Activated CD4-positive, alpha-beta memory T cell treated with anti-CD3 and anti-CD28 coated beads for 36 hours (primary cell): ENCODE measurements at regions of chr7 and their contacts with region 1.

Region 1: DNA sequence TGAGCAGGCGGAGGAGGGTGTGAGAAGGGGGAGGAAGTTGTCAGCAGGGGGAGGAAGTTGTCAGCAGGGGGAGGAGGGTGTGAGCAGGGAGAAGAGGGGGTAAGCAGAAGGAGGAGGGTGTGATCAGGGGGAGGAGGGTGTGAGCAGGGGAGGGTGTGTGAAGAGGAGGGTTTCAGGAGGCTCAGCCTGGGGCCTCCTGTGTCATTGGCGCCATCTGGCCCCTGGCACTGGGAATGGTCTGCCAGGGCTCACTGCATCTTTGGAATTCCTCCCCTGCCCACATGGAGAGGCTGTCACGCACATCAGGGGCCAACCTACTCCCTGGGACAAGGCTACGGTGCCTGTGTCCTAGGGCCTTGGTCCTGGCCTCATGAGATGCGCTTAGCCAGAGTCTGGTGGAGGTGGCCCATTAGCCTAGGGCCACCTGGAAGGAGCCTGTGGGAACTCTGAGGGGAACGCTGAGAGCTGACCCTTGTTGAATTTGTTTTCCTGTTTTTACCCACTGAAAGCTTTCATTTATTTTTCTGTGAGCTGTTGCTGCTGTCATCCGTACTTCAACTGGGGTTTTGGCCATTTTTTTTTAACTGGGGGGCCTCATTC is 18.0 kb downstream of the CAMK2B start:
- DNase-seq: peak; percentile 46
- H3K4me3 Mint-ChIP-seq: no peak overlapping the region
- H3K27ac Mint-ChIP-seq: no peak overlapping the region
- H3K4me1 Mint-ChIP-seq: peaks cover 2% of the 10 kb centered on the region
- H3K27me3 Mint-ChIP-seq: peaks cover 10% of the 10 kb centered on the region

Region 2: DNA sequence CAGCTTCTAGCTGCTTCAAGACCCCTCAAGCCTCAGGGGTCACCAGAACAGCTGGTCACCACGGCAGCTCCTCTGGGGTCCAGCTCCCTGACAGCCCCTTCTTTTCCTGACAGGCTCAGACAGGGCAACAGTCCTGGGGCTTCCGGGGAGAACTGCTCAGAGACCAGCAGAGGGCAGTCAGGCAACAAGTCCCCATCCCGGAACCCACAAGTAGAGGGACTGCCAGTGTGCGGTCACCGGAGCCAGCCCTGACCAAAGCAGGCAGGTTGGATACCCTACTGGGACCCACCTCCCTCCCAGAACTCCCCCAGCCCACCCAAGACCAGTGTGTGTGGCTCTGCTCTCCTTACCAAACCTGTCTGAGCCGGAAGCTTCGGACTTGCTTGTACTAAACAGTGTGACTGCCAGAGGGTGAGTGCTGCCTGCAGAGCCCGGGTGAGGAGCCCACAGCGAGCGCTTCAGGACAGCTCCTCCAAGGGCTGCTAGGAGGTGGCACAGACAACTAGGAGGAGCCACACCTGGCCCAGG is 66.4 kb before region 1 on chr7:
- CTCF ChIA-PET with region 1: interaction called, 28 read pairs
- POLR2A ChIA-PET with region 1: no interaction called
- intact Hi-C with region 1: loop called (anchors 1 kb)
- DNase-seq: peak; percentile 77
- H3K4me3 Mint-ChIP-seq: no peak overlapping the region
- H3K27ac Mint-ChIP-seq: no peak overlapping the region
- H3K4me1 Mint-ChIP-seq: no peaks in the 10 kb centered on the region
- H3K27me3 Mint-ChIP-seq: no peaks in the 10 kb centered on the region